Gastrocnemius medialis (tissue), 4 donors: ENCODE measurements at regions of chr6 and their contacts with region 1.

Region 1: GRCh38 chr6:144063744-144064401 is 31.5 kb downstream of the SF3B5 start:
- DNase-seq: peak; percentile 63 to 65
- ATAC-seq: peak; percentile 81 to 88
- H3K4me3 ChIP-seq: peak overlapping the region; percentile 57 to 82 (median 74)
- H3K27ac ChIP-seq: peak overlapping the region in 1 of 4 donors; percentile 21
- H3K4me1 ChIP-seq: peaks cover 4% of the 10 kb centered on the region in 2 donors
- H3K27me3 ChIP-seq: peaks cover 8 to 19% (median 19%) of the 10 kb centered on the region in 3 donors
- CTCF ChIP-seq: peak in 3 of 5 experiments; percentile 8 to 44 (median 38)
- POLR2A ChIP-seq: peak; percentile 27 to 57

Region 2: DNA sequence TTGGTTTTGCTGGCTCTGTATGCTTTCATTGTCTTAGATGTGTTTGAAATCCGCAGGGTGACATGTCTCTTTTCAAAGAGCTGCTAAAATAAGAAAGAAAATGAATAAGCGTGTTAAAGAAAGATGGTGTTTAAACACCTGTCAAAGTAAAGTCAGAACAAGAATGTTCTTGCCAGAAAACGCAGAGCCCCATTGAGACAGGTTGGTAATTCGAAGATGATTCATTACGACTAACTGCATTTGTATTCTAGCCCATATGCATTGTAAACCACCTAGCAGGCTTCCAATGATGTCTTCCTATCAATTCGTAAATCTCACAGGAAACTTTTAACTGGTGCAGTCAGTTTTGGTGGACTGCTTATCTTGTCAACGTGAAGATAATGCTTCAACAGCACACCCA is 369.3 kb before region 1 on chr6:
- in situ Hi-C with region 1: no loop called
- intact Hi-C with region 1: no loop called
- DNase-seq: no peak
- ATAC-seq: no peak
- H3K4me3 ChIP-seq: no peak overlapping the region
- H3K27ac ChIP-seq: peak overlapping the region in 1 of 4 donors; percentile 32
- H3K4me1 ChIP-seq: peaks cover 61 to 76% of the 10 kb centered on the region in 2 donors
- H3K27me3 ChIP-seq: no peaks in the 10 kb centered on the region
- CTCF ChIP-seq: no peak
- POLR2A ChIP-seq: no peak

Region 3: GRCh38 chr6:144095331-144096002 is 31.6 kb after region 1 on chr6 and contains the start of gene SF3B5:
- in situ Hi-C with region 1: no loop called
- intact Hi-C with region 1: loop called (anchors 2 kb)
- DNase-seq: peak; percentile 99
- ATAC-seq: peak; percentile 99 to 100
- H3K4me3 ChIP-seq: peak within 1 kb of the TSS; percentile 77 to 93 (median 90)
- H3K27ac ChIP-seq: peak within 1 kb of the TSS; percentile 72 to 91 (median 80)
- H3K4me1 ChIP-seq: peaks cover 17 to 21% of the 10 kb centered on the region in 2 donors
- H3K27me3 ChIP-seq: no peaks in the 10 kb centered on the region
- CTCF ChIP-seq: peak in 1 of 5 experiments; percentile 18
- POLR2A ChIP-seq: peak; percentile 62 to 66
- total RNA-seq, gene SF3B5: 168 to 188 (median 186) TPM